B cell (primary cell): ENCODE measurements at regions of chr10 and their contacts with region 1.

Region 1: GRCh38 chr10:96229568-96230030 is 41.8 kb downstream of the BLNK start:
- DNase-seq: peak; percentile 91
- ATAC-seq: peak; percentile 72
- H3K4me3 ChIP-seq: no peak overlapping the region
- H3K4me3 Mint-ChIP-seq: peak overlapping the region; percentile 14
- H3K27ac ChIP-seq: peak overlapping the region; percentile 55 to 77
- H3K27ac Mint-ChIP-seq: peak overlapping the region; percentile 90
- H3K4me1 ChIP-seq: peaks cover 21 to 34% of the 10 kb centered on the region in 2 donors
- H3K4me1 Mint-ChIP-seq: peaks cover 44% of the 10 kb centered on the region
- H3K27me3 ChIP-seq: no peaks in the 10 kb centered on the region
- H3K27me3 Mint-ChIP-seq: no peaks in the 10 kb centered on the region
- CTCF ChIP-seq: peak; percentile 84

Region 2: GRCh38 chr10:96017191-96017687 is 212.4 kb before region 1 on chr10:
- CTCF ChIA-PET with region 1: interaction called, 28 read pairs
- POLR2A ChIA-PET with region 1: no interaction called
- intact Hi-C with region 1: loop called (anchors 5 kb)
- DNase-seq: peak; percentile 74
- ATAC-seq: peak; percentile 61
- H3K4me3 ChIP-seq: no peak overlapping the region
- H3K4me3 Mint-ChIP-seq: no peak overlapping the region
- H3K27ac ChIP-seq: no peak overlapping the region
- H3K27ac Mint-ChIP-seq: no peak overlapping the region
- H3K4me1 ChIP-seq: peaks cover 0 to 5% of the 10 kb centered on the region in 2 donors
- H3K4me1 Mint-ChIP-seq: peaks cover 4% of the 10 kb centered on the region
- H3K27me3 ChIP-seq: no peaks in the 10 kb centered on the region
- H3K27me3 Mint-ChIP-seq: no peaks in the 10 kb centered on the region
- CTCF ChIP-seq: peak; percentile 85

Region 3: DNA sequence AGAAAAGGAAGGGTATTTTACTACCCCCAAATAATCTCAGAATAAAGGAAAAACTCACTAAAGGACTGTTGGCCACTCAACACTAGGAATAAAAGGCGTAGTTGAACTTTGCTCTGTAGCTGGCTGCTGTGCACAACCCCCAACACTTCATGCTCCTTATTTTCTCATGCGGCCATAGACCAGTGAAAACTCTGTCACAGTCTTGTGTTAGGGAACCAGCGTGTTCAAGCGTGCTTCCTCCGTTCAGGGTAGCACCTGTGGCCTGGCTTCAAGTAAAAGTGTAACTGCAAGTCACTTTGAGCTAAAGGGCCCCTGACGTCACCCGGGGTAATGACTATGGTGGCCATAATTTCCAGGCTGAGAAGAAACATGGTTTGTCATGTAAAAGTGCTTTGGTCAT is 14.8 kb after region 1 on chr10:
- CTCF ChIA-PET with region 1: interaction called, 53 read pairs
- POLR2A ChIA-PET with region 1: interaction called, 4 read pairs
- intact Hi-C with region 1: loop called (anchors 1 kb)
- DNase-seq: peak; percentile 91
- ATAC-seq: peak; percentile 99
- H3K4me3 ChIP-seq: peak overlapping the region in 2 of 5 experiments; percentile 10 to 22
- H3K4me3 Mint-ChIP-seq: peak overlapping the region; percentile 77
- H3K27ac ChIP-seq: peak overlapping the region; percentile 84 to 90
- H3K27ac Mint-ChIP-seq: peak overlapping the region; percentile 91
- H3K4me1 ChIP-seq: peaks cover 65 to 70% of the 10 kb centered on the region in 2 donors
- H3K4me1 Mint-ChIP-seq: peaks cover 76% of the 10 kb centered on the region
- H3K27me3 ChIP-seq: no peaks in the 10 kb centered on the region
- H3K27me3 Mint-ChIP-seq: no peaks in the 10 kb centered on the region
- CTCF ChIP-seq: no peak

Region 4: DNA sequence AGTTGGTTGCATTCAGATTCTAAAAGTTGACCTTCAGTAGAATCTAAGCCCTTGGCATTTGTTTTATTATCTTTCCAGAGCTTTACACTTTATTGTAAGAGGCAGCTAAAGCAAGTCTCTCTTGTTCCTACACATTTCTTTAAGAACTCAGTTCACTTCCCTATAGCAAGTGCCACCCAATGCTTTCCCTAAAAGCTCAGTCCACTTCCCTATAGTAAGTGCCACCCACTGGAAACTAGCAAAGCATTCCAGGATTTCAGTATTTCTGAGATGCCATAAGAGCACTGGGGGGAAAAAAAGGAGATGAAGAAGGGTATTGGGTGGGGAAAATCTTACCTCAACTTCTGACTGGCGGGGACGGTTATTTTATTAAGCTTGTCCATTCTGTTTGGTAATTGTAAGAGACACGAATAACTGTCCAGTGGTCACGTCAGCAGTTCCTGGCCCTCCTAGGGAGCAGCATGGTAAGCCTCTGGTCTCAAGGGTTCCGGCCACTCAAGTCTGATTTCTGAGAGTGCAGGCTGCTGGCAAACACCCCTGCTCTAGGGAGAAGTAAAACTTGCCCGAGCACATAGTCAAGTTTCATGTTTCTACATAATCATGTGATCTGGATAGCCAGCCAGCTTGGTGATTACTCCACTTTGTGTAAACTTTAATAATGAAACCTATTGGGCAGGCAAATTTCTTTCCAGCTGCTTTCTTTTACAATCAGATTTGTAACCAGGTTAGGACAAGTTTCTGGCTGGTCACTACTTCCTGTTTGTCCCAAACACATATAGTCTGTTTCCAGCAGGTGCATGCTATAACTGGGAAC is 41.6 kb after region 1 on chr10 and contains the start of gene BLNK:
- CTCF ChIA-PET with region 1: interaction called, 153 read pairs
- POLR2A ChIA-PET with region 1: interaction called, 25 read pairs
- intact Hi-C with region 1: loop called (anchors 1 kb)
- DNase-seq: peak; percentile 82
- ATAC-seq: peak; percentile 54
- H3K4me3 ChIP-seq: peak within 1 kb of the TSS; percentile 73 to 97 (median 96)
- H3K4me3 Mint-ChIP-seq: peak within 1 kb of the TSS; percentile 97
- H3K27ac ChIP-seq: peak within 1 kb of the TSS; percentile 79 to 88
- H3K27ac Mint-ChIP-seq: peak within 1 kb of the TSS; percentile 99
- H3K4me1 ChIP-seq: peaks cover 61 to 63% of the 10 kb centered on the region in 2 donors
- H3K4me1 Mint-ChIP-seq: peaks cover 80% of the 10 kb centered on the region
- H3K27me3 ChIP-seq: no peaks in the 10 kb centered on the region
- H3K27me3 Mint-ChIP-seq: no peaks in the 10 kb centered on the region
- CTCF ChIP-seq: no peak
- total RNA-seq, gene BLNK: 205 and 210 TPM in 2 replicates

Region 5: GRCh38 chr10:96306516-96306915 is 76.9 kb after region 1 on chr10:
- CTCF ChIA-PET with region 1: interaction called, 964 read pairs
- POLR2A ChIA-PET with region 1: no interaction called
- intact Hi-C with region 1: no loop called
- DNase-seq: peak; percentile 75
- ATAC-seq: peak; percentile 95
- H3K4me3 ChIP-seq: no peak overlapping the region
- H3K4me3 Mint-ChIP-seq: peak overlapping the region; percentile 53
- H3K27ac ChIP-seq: no peak overlapping the region
- H3K27ac Mint-ChIP-seq: no peak overlapping the region
- H3K4me1 ChIP-seq: peaks cover 25 to 27% of the 10 kb centered on the region in 2 donors
- H3K4me1 Mint-ChIP-seq: peaks cover 26% of the 10 kb centered on the region
- H3K27me3 ChIP-seq: peaks cover 0 to 23% (median 11%) of the 10 kb centered on the region in 4 experiments
- H3K27me3 Mint-ChIP-seq: peaks cover 34% of the 10 kb centered on the region
- CTCF ChIP-seq: no peak

Region 6: GRCh38 chr10:96339957-96340904 is 110.6 kb after region 1 on chr10:
- CTCF ChIA-PET with region 1: interaction called, 107 read pairs
- POLR2A ChIA-PET with region 1: interaction called, 4 read pairs
- intact Hi-C with region 1: loop called (anchors 1 kb)
- DNase-seq: peak; percentile 70
- ATAC-seq: peak; percentile 73
- H3K4me3 ChIP-seq: no peak overlapping the region
- H3K4me3 Mint-ChIP-seq: no peak overlapping the region
- H3K27ac ChIP-seq: no peak overlapping the region
- H3K27ac Mint-ChIP-seq: no peak overlapping the region
- H3K4me1 ChIP-seq: peaks cover 4 to 10% of the 10 kb centered on the region in 2 donors
- H3K4me1 Mint-ChIP-seq: peaks cover 10% of the 10 kb centered on the region
- H3K27me3 ChIP-seq: no peaks in the 10 kb centered on the region
- H3K27me3 Mint-ChIP-seq: peaks cover 2% of the 10 kb centered on the region
- CTCF ChIP-seq: peak; percentile 84